Testis (tissue), 5 donors: ENCODE measurements at regions of chr3 and their contacts with region 1.

Region 1: DNA sequence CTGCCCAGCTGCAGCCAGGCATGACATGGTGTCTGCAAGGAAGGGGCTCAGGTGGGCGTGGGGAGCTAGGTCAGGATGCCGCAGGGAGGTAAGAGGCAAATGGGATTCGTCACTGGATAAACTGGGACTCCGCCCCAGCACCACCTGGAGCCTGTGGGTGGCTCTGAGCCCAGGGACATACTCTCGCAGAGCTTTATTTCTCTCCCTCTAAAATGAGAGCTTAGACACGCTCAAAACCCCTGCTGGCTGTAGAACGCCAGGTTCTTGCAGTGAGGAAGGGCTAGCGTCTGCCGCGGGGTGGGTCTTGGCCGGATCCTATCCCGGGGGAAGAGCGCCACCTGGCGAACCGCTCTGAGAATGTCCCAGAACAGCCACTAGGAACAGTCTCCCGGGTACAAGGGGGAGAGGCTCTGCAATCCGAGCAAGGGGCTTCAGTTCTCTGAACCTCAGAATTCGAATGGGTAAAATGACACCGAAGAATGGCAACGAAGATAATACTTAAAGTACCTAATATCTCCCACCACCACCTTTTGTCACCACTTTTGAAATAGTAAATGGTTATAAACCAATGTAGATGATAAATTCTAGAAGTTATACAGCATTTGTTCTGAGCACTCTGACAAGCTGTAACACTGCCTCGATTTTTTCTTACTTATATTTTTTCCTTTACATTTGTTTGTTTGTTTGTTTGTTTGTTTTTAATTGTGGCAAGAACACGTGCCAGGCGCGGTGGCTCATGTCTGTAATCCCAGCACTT is 53.2 kb upstream of the SRGAP3 start:
- DNase-seq: peak; percentile 92
- H3K4me3 ChIP-seq: peak overlapping the region; percentile 26 to 48
- H3K27ac ChIP-seq: no peak overlapping the region
- H3K4me1 ChIP-seq: peaks cover 10% of the 10 kb centered on the region
- H3K27me3 ChIP-seq: no peaks in the 10 kb centered on the region
- CTCF ChIP-seq: peak; percentile 89
- POLR2A ChIP-seq: no peak

Region 2: GRCh38 chr3:8822141-8822540 is 480.5 kb before region 1 on chr3:
- intact Hi-C with region 1: no loop called
- DNase-seq: no peak
- H3K4me3 ChIP-seq: no peak overlapping the region
- H3K27ac ChIP-seq: no peak overlapping the region
- H3K4me1 ChIP-seq: no peaks in the 10 kb centered on the region
- H3K27me3 ChIP-seq: no peaks in the 10 kb centered on the region
- CTCF ChIP-seq: no peak
- POLR2A ChIP-seq: no peak

Region 3: GRCh38 chr3:8970971-8971589 is 331.5 kb before region 1 on chr3:
- intact Hi-C with region 1: loop called (anchors 5 kb)
- DNase-seq: peak; percentile 80
- H3K4me3 ChIP-seq: no peak overlapping the region
- H3K27ac ChIP-seq: no peak overlapping the region
- H3K4me1 ChIP-seq: no peaks in the 10 kb centered on the region
- H3K27me3 ChIP-seq: no peaks in the 10 kb centered on the region
- CTCF ChIP-seq: peak; percentile 96 to 98 (median 97)
- POLR2A ChIP-seq: no peak

Region 4: GRCh38 chr3:8987645-8988383 is 314.8 kb before region 1 on chr3:
- intact Hi-C with region 1: loop called (anchors 5 kb)
- DNase-seq: peak; percentile 82
- H3K4me3 ChIP-seq: no peak overlapping the region
- H3K27ac ChIP-seq: no peak overlapping the region
- H3K4me1 ChIP-seq: no peaks in the 10 kb centered on the region
- H3K27me3 ChIP-seq: no peaks in the 10 kb centered on the region
- CTCF ChIP-seq: peak; percentile 61 to 80 (median 71)
- POLR2A ChIP-seq: no peak